Common myeloid progenitor, CD34-positive (primary cell): ENCODE measurements at regions of chr2 and their contacts with region 1.

Region 1: GRCh38 chr2:55050133-55050994 is at the start of gene RTN4:
- DNase-seq: peak; percentile 99 to 100 (median 99)
- H3K4me3 ChIP-seq: peak within 1 kb of the TSS; percentile 94 to 100 (median 97)
- H3K27ac ChIP-seq: peak within 1 kb of the TSS; percentile 91 to 97
- H3K4me1 ChIP-seq: peaks cover 29 to 57% (median 43%) of the 10 kb centered on the region in 4 experiments
- H3K27me3 ChIP-seq: no peaks in the 10 kb centered on the region

Region 2: GRCh38 chr2:54915101-54915500 is 135.3 kb before region 1 on chr2:
- CTCF ChIA-PET with region 1: no interaction called
- POLR2A ChIA-PET with region 1: no interaction called
- DNase-seq: no peak
- H3K4me3 ChIP-seq: no peak overlapping the region
- H3K27ac ChIP-seq: no peak overlapping the region
- H3K4me1 ChIP-seq: peaks cover 0 to 5% (median 0%) of the 10 kb centered on the region in 4 experiments
- H3K27me3 ChIP-seq: no peaks in the 10 kb centered on the region

Region 3: GRCh38 chr2:55014962-55015939 is 35.1 kb before region 1 on chr2:
- CTCF ChIA-PET with region 1: interaction called, 36 read pairs
- POLR2A ChIA-PET with region 1: no interaction called
- DNase-seq: peak; percentile 63 to 71 (median 68)
- H3K4me3 ChIP-seq: no peak overlapping the region
- H3K27ac ChIP-seq: no peak overlapping the region
- H3K4me1 ChIP-seq: peaks cover 28 to 67% (median 45%) of the 10 kb centered on the region in 4 experiments
- H3K27me3 ChIP-seq: no peaks in the 10 kb centered on the region

Region 4: DNA sequence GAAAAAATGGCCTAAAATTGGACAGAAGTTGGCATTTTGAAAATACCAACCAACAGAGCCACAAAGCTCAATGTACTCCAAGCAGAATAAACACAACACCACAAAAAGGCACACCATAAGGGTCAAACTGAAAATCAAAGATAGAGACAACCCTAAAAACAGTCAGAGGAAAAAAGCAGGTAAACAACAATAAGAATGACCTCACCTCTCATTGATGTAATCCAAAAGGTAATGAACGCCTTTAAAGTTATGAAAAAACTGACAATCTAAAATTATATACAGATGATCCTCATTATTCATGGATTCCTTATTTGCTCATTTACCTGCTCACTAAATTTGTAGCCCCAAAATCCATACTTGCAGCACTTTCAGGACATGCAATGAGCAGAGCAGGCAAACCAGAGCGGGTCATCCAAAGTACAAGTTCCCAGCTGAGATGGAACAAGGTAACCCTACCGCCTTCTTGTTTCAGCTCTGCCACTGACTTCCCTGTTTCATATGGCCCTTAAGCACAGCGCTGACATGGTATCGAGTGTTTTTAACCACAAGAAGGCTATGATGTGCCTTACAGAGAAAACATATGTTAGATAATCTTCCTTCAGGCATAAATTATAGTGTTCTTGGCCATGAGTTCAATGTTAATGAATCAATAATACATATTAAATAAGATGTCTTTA is 17.2 kb before region 1 on chr2:
- CTCF ChIA-PET with region 1: interaction called, 23 read pairs
- POLR2A ChIA-PET with region 1: no interaction called
- DNase-seq: peak; percentile 49 to 90 (median 82)
- H3K4me3 ChIP-seq: no peak overlapping the region
- H3K27ac ChIP-seq: no peak overlapping the region
- H3K4me1 ChIP-seq: peaks cover 7 to 23% (median 13%) of the 10 kb centered on the region in 4 experiments
- H3K27me3 ChIP-seq: no peaks in the 10 kb centered on the region

Region 5: DNA sequence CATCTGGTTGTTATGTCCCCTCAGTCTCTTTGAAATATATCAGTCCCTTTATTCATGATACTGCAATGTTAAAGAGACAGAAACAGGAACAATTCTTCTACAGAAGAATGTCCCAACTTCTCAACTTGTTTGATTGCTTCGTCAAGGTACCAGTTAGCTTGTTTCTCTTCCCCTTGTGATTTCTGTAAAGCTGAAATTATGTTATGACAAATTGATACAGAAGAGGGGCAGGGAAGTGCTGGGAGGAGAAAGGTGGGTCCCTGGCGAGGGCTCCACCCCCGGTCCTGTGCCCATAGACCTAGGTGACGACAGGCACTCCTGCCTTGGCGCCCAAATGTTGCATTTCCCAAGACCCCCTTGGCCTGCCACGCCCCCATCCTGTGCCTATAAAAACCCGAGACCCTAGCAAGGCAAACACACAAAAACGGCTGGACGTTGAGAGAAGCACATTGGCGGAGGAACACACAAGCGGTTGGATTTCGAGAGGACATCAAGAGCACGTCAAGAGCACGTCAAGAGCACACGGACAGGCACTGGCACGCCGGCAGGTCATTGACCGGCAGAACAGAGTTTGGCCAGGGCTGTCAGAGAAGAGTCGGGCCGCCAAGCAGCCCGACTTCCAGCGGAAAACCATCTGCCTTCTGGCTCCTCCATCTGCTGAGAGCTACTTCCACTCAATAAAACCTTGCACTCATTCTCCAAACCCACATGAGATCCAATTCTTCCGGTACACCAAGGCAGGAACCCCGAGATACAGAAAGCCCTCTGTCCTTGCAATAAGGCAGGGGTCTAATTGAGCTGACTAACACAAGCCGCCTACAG is 11.4 kb after region 1 on chr2:
- CTCF ChIA-PET with region 1: interaction called, 21 read pairs
- POLR2A ChIA-PET with region 1: no interaction called
- DNase-seq: no peak
- H3K4me3 ChIP-seq: no peak overlapping the region
- H3K27ac ChIP-seq: no peak overlapping the region
- H3K4me1 ChIP-seq: no peaks in the 10 kb centered on the region
- H3K27me3 ChIP-seq: no peaks in the 10 kb centered on the region

Region 6: GRCh38 chr2:55120634-55121359 is 70.4 kb after region 1 on chr2:
- CTCF ChIA-PET with region 1: interaction called, 10 read pairs
- POLR2A ChIA-PET with region 1: no interaction called
- DNase-seq: peak in 2 of 3 donors; percentile 67 to 81
- H3K4me3 ChIP-seq: peak overlapping the region in 1 of 7 experiments; percentile 23
- H3K27ac ChIP-seq: peak overlapping the region in 1 of 2 experiments; percentile 71
- H3K4me1 ChIP-seq: peaks cover 14 to 58% (median 35%) of the 10 kb centered on the region in 4 experiments
- H3K27me3 ChIP-seq: no peaks in the 10 kb centered on the region

Region 7: DNA sequence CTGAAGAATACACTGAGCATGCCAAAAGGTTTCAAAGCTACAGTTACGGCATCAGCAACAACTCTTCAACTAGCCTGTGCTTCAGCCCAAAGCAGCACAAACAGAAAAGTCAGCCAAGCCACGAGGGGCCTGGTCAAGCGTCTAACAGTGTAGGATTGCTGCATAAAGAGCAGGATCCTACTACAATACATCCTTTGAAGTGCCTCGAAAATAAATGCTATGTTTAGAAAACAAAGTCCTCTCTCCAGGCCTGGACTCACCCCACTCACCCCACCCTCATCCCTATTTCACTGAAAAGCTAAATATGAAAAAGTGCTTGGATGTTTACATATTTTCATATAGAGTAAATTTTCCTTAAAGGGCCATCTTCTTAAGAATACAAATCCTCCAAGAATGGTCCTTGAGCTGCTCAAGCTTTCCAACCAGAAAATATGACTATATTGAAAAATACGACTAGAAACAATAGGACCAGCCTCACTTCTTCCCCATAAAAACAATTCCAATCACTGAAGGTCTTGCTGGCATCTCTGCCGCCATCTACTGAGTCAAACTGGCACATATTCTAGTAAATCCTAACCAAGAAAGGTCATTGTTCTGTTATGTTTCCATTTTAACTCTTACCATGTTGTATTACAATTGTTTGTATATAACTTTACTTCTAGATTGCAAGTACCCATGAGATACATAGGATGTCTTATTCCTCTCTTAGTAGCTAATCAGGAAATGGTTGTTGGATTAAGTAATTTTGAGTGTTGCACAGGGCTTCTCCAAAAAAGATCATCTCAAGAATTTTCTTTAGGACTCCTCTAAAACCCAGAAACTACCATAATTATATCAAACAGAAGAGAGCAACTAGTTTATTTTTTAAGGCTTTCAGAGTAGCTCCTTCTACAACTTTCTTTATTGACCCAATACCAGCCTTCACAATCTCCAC is 118.1 kb after region 1 on chr2:
- CTCF ChIA-PET with region 1: interaction called, 76 read pairs
- POLR2A ChIA-PET with region 1: no interaction called
- DNase-seq: peak; percentile 64 to 82 (median 78)
- H3K4me3 ChIP-seq: no peak overlapping the region
- H3K27ac ChIP-seq: no peak overlapping the region
- H3K4me1 ChIP-seq: peaks cover 0 to 2% (median under 1%) of the 10 kb centered on the region in 4 experiments
- H3K27me3 ChIP-seq: no peaks in the 10 kb centered on the region

Region 8: DNA sequence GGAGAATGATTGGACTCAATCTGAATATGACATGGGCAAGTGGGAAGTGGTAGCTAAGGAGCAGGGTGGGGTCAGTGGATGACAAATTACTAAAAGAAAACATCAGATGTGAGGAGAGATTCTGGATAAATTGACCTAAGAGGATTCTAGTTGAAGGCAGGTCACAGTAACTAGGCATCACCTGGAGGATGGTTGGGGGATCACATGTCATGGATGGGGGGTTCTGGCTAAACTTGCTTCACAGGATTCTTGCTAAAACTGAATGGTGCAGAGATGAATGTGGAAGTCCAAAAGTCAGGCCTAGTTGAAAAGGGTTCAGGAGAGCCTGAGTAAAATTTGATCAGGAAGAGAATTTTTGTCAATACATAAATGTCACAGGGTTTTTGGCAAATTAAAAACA is 163.5 kb after region 1 on chr2:
- CTCF ChIA-PET with region 1: no interaction called
- POLR2A ChIA-PET with region 1: no interaction called
- DNase-seq: no peak
- H3K4me3 ChIP-seq: no peak overlapping the region
- H3K27ac ChIP-seq: no peak overlapping the region
- H3K4me1 ChIP-seq: no peaks in the 10 kb centered on the region
- H3K27me3 ChIP-seq: no peaks in the 10 kb centered on the region